CD8-positive, alpha-beta T cell (primary cell): ENCODE measurements at regions of chr6 and their contacts with region 1.

Region 1: DNA sequence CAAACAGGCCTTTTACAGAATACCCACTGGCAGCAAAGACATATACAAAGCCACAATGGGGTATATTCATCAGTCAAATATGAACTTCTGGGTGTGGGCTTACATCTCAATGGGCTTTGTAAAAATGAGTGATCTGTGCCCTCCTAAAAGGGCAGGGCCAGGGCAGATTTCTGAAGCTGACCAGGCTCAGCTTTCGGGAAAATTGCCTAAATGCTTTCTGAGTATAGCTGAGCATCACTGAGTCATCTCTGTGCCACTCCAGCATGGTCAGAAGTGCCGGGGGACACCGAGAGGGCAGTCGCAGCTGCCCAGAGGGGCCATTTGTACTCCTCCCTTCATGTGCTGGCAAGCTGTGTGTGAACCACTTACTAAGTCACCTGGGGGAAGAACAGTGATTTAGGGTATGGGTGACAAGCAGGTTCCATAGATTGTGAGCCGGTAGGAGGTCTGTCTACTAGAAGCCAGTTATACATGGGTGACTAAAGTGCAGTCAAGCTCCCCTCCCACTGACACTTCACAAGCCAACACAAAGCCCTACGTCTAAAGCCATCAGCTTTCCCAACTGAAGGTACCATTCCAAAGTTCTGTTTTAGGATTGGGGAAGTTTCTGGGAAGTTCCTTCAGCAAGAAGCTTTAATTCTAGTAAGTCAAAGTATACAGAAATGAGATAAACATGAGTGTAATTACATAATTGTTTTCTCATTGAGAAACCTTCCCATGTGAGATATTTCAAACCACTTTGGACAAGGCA is 147.6 kb upstream of the TAB2 start:
- DNase-seq: no peak
- ATAC-seq: no peak
- H3K4me3 ChIP-seq: no peak overlapping the region
- H3K4me3 Mint-ChIP-seq: no peak overlapping the region
- H3K27ac ChIP-seq: no peak overlapping the region
- H3K27ac Mint-ChIP-seq: no peak overlapping the region
- H3K4me1 ChIP-seq: peaks cover 30% of the 10 kb centered on the region
- H3K4me1 Mint-ChIP-seq: peaks cover 44% of the 10 kb centered on the region
- H3K27me3 ChIP-seq: no peaks in the 10 kb centered on the region
- H3K27me3 Mint-ChIP-seq: no peaks in the 10 kb centered on the region
- CTCF ChIP-seq: no peak

Region 2: DNA sequence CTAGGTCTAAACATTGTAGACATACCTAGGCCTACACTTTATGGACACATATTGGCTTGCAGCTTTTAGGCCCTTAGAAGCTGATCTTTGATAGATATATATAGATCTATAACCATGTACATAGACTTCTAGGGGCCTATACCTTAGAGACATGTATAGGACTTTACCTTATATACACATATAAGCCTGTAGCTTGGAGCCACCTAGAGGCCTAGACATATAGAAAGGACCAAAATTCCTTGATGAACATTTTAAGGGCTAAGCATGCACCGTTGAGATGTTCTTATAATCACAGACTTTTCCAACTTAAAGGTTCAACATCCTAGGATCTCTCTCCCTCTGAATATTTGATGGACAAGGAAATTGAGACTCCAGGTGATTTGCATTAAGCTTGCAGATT is 1199.0 kb before region 1 on chr6:
- CTCF ChIA-PET with region 1: no interaction called
- POLR2A ChIA-PET with region 1: no interaction called
- intact Hi-C with region 1: no loop called
- DNase-seq: no peak
- ATAC-seq: no peak
- H3K4me3 ChIP-seq: no peak overlapping the region
- H3K4me3 Mint-ChIP-seq: no peak overlapping the region
- H3K27ac ChIP-seq: no peak overlapping the region
- H3K27ac Mint-ChIP-seq: no peak overlapping the region
- H3K4me1 ChIP-seq: no peaks in the 10 kb centered on the region
- H3K4me1 Mint-ChIP-seq: no peaks in the 10 kb centered on the region
- H3K27me3 ChIP-seq: no peaks in the 10 kb centered on the region
- H3K27me3 Mint-ChIP-seq: no peaks in the 10 kb centered on the region
- CTCF ChIP-seq: no peak

Region 3: DNA sequence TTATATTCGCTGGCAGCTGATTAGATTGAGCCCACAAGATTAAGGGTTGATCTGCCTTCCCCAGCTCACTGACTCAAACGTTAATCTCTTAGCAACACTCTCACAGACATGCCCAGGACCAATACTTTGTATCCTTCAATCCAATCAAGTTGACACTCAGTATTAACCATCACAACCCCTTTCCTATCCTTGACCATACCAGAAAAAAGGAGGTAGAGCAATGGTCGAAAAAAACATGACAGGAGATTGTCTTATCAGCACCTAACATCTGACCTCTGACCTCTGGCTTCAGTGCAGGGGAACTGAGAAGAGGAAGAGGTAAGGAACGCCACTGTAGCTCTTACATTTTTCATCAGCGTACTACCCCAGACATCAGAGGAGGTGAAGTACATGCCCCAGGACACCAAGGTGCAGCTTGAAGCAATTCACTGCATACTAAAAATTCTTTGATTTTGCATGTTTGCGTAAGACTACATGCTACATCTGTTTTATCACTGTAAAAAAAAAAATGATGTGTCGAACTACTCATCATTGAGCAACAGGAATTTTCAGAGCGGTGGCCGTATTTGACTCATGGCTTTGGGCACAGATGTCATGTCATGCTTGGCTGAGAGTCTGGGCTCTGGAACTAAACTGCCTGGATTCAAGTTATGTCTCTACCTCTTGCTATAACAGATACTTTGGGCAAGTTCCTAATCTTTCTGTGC is 40.4 kb before region 1 on chr6:
- CTCF ChIA-PET with region 1: no interaction called
- POLR2A ChIA-PET with region 1: no interaction called
- intact Hi-C with region 1: loop called in 1 of 2 experiments (anchors 5 kb)
- DNase-seq: peak in 1 of 9 experiments; percentile 18
- ATAC-seq: no peak
- H3K4me3 ChIP-seq: no peak overlapping the region
- H3K4me3 Mint-ChIP-seq: no peak overlapping the region
- H3K27ac ChIP-seq: no peak overlapping the region
- H3K27ac Mint-ChIP-seq: peak overlapping the region; percentile 79
- H3K4me1 ChIP-seq: peaks cover 24% of the 10 kb centered on the region
- H3K4me1 Mint-ChIP-seq: peaks cover 51% of the 10 kb centered on the region
- H3K27me3 ChIP-seq: no peaks in the 10 kb centered on the region
- H3K27me3 Mint-ChIP-seq: no peaks in the 10 kb centered on the region
- CTCF ChIP-seq: no peak